ENCODE measurements at regions of chr2 and their contacts with region 1.

Region 1: GRCh38 chr2:100262555-100263320 is 59.6 kb downstream of the LONRF2 start:
- DNase-seq: no peak
- H3K4me3 ChIP-seq: peak overlapping the region; percentile 18; the same call in 1 of the 2 replicates
- CTCF ChIP-seq: peak; percentile 94

Region 2: DNA sequence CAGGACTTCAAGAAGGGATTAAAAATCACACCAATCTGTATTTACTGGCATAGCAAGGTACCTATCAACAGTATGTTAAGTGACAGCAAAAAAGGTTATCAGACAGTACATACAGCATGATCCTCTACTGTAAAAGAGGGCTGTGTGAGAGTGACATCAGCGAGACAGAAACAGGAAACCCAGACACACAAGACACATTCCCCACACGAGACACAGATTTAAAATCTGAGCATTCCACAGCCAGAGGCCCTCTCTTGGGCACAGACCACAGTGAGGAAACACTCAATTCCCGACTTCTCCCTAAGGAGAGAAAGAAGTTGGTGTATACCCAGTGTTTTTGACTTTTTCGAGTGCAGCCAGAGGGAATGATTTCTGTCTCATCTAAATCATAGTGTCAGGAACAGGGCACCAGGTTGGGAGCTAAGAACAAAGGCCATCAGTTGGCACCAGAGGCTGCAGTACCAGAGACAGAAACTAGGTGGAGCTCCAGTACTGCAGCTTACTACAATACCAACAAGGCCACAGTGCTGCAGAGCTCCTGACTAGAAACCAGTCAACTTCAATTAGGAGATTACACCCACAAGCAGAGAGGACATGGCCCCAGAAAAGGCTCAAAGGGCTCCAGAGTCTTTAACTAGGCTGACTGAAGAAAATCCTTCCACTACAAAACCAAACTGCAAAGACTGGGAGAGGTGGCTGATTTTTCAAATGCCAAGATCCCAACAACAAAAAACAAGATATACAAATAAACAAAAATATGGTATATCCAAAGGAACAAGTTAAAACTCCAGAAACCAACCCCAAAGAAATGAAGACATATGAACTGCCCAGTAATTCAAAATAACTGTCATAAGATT is 1613.4 kb before region 1 on chr2:
- CTCF ChIA-PET with region 1: interaction called, 15 read pairs
- POLR2A ChIA-PET with region 1: no interaction called
- DNase-seq: peak; percentile 21
- H3K4me3 ChIP-seq: no peak overlapping the region
- CTCF ChIP-seq: peak; percentile 93

Region 3: GRCh38 chr2:99725820-99726219 is 536.9 kb before region 1 on chr2:
- CTCF ChIA-PET with region 1: interaction called, 71 read pairs
- POLR2A ChIA-PET with region 1: no interaction called
- DNase-seq: no peak
- H3K4me3 ChIP-seq: no peak overlapping the region
- CTCF ChIP-seq: no peak

Region 4: GRCh38 chr2:100113990-100114433 is 148.7 kb before region 1 on chr2:
- CTCF ChIA-PET with region 1: no interaction called
- POLR2A ChIA-PET with region 1: no interaction called
- DNase-seq: no peak
- H3K4me3 ChIP-seq: no peak overlapping the region
- CTCF ChIP-seq: no peak

Region 5: GRCh38 chr2:100272841-100273329 is 10.1 kb after region 1 on chr2:
- CTCF ChIA-PET with region 1: interaction called, 134 read pairs
- POLR2A ChIA-PET with region 1: interaction called, 3 read pairs
- DNase-seq: no peak
- H3K4me3 ChIP-seq: no peak overlapping the region
- CTCF ChIP-seq: no peak

Region 6: DNA sequence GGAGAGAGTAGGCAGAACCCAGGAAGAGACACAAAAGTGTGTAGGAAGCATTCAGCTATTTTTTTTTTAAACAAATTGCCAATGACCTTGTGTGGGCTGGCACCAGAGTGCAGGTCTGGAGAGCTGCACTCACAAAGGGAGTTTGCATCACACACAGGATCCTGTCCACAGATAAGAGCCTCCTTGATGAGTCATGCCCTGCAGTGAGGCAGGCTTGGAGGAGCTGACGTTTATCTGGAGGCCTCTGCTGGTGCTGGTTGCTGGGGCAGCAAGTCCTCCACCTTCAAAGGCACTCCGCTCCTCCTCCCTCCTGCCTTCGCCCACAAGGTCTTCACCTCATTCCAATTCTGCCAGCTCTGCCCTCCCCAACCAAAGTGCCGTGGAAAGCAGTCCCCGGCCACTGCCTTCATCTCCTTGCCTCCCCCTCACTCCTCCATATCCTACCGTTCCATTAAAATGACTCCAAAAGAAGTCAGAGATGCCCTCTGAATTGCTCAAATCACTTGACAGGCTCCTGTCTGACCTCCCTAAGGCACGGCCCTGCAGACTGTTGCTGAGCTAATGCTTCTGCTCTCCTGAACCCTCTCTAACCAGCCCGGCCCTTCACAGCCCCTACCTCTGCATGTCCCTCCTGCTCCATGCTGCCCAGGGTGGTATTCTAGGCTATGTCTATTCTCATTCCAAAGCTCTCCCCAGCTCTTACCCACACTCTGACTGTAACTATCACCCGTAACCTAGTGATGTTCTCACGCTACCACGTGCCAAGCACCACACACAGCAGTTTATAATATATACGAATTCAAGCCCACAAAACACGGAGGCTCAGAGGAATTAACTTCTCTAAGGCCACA is 28.6 kb after region 1 on chr2:
- CTCF ChIA-PET with region 1: interaction called, 41 read pairs
- POLR2A ChIA-PET with region 1: no interaction called
- DNase-seq: peak; percentile 92
- H3K4me3 ChIP-seq: no peak overlapping the region
- CTCF ChIP-seq: no peak

Region 7: GRCh38 chr2:100381240-100381639 is 118.5 kb after region 1 on chr2:
- CTCF ChIA-PET with region 1: interaction called, 504 read pairs
- POLR2A ChIA-PET with region 1: interaction called, 3 read pairs
- DNase-seq: peak; percentile 14
- H3K4me3 ChIP-seq: no peak overlapping the region
- CTCF ChIP-seq: peak; percentile 85